A549 (cell line): ENCODE measurements at regions of chr22 and their contacts with region 1.

Region 1: GRCh38 chr22:31272522-31273446 is 19.5 kb downstream of the PIK3IP1 start:
- DNase-seq: peak; percentile 39 to 59
- ATAC-seq: peak; percentile 87 to 93
- H3K4me3 ChIP-seq: no peak overlapping the region
- H3K27ac ChIP-seq: no peak overlapping the region
- H3K4me1 ChIP-seq: no peaks in the 10 kb centered on the region
- CTCF ChIP-seq: peak; percentile 61
- EP300 ChIP-seq: no peak
- POLR2A ChIP-seq: no peak
- RAD21 ChIP-seq: peak; percentile 66 to 68

Region 2: GRCh38 chr22:30908051-30908461 is 364.7 kb before region 1 on chr22:
- CTCF ChIA-PET with region 1: no interaction called
- POLR2A ChIA-PET with region 1: no interaction called
- DNase-seq: no peak
- ATAC-seq: no peak
- H3K4me3 ChIP-seq: no peak overlapping the region
- H3K27ac ChIP-seq: no peak overlapping the region
- H3K4me1 ChIP-seq: no peaks in the 10 kb centered on the region
- CTCF ChIP-seq: no peak
- EP300 ChIP-seq: no peak
- POLR2A ChIP-seq: no peak
- RAD21 ChIP-seq: no peak

Region 3: GRCh38 chr22:31107178-31107893 is 165.4 kb before region 1 on chr22 and contains the start of gene SELENOM:
- CTCF ChIA-PET with region 1: interaction called, 10 read pairs
- POLR2A ChIA-PET with region 1: no interaction called
- DNase-seq: peak; percentile 80 to 96
- ATAC-seq: peak; percentile 94 to 98
- H3K4me3 ChIP-seq: peak within 1 kb of the TSS; percentile 66
- H3K27ac ChIP-seq: peak within 1 kb of the TSS; percentile 78 to 91
- H3K4me1 ChIP-seq: peaks cover 7% of the 10 kb centered on the region
- CTCF ChIP-seq: peak; percentile 77
- EP300 ChIP-seq: no peak
- POLR2A ChIP-seq: peak; percentile 55
- RAD21 ChIP-seq: peak; percentile 74 to 84
- polyA plus RNA-seq, gene SELENOM: 14.2 and 15.3 TPM in 2 replicates

Region 4: DNA sequence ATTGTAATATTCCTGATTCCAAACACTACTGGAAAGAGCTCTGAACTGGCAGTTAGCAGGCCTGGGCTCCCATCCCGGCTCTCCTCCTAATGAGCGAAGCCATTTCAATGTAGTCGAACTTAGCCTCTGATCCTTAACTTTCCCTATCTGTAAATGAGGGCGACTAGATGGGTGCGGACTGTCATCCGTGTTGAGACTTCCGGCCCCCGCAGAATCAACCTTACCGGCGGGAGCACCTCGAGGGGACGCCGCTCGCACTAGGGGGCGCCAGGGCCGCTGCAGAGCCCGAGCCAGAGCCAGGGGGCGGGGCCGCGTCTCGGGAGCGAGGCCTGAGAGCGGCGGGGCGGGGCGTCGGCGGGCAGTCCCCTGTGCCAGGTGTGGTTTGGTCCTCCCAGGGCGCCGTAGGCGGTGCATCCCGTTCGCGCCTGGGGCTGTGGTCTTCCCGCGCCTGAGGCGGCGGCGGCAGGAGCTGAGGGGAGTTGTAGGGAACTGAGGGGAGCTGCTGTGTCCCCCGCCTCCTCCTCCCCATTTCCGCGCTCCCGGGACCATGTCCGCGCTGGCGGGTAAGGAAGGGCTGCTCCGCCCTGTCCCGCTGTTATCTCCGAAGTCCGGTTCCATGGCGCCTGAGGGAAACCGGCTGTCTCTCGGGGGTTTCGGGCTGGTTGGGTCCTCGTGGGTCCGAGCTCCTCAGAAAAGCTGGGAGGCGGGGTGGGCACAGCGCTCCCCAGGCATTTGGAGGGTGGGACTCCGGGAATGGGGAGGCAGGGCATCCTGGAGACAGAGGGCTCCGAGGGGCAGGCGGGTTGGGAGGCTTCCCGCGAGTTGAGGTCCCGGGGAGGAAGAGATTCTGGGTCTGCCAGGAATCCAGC is 60.7 kb before region 1 on chr22 and contains the start of gene LIMK2:
- CTCF ChIA-PET with region 1: interaction called, 134 read pairs
- POLR2A ChIA-PET with region 1: interaction called, 4 read pairs
- DNase-seq: peak; percentile 78 to 84
- ATAC-seq: peak; percentile 98
- H3K4me3 ChIP-seq: peak within 1 kb of the TSS; percentile 79
- H3K27ac ChIP-seq: peak within 1 kb of the TSS; percentile 81 to 88
- H3K4me1 ChIP-seq: peaks cover 8% of the 10 kb centered on the region; the same call in 1 of the 3 replicates
- CTCF ChIP-seq: peak; percentile 72
- EP300 ChIP-seq: no peak
- POLR2A ChIP-seq: peak; percentile 64
- RAD21 ChIP-seq: peak; percentile 59 to 76
- polyA plus RNA-seq, gene LIMK2: 3.1 and 4.9 TPM in 2 replicates

Region 5: DNA sequence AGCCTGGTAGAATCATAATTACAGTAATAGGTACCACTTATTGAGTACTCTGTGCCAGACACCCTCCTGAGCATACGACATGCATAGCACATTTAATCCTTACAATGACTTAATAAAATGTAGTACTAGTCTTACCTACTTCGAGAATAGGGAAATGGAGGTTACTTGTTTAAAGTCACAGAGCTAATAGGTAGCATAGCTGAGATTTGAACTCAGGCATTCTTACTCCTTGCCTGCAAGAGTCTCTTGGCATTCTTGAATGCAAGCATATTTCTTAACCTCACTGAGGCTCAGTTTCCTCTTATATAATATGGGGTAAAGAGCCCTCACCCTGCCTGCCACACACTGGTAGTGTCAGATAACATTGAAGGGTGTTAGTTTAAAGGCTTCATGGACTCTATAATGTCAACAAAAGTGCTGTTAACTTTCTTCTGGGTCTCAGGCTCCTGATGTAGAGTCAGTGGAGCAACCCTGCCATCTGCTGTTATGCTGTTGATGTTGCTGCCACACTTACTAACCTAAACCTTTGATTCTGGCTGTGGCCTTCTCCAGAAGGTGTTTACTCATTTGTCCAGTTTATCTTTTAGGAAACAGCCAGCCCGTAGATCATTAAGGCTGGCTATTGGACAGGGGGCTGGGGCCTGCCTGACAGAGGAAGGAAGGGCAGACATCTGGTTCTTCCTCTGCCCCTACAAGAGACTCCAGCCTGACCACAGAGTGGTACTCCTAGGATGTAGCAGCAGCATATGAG is 41.7 kb before region 1 on chr22:
- CTCF ChIA-PET with region 1: interaction called, 18 read pairs
- POLR2A ChIA-PET with region 1: no interaction called
- DNase-seq: peak in 1 of 2 experiments; percentile 40
- ATAC-seq: peak; percentile 73 to 78; a peak in 5 of 6 replicates
- H3K4me3 ChIP-seq: no peak overlapping the region
- H3K27ac ChIP-seq: no peak overlapping the region
- H3K4me1 ChIP-seq: 0 out of 3 replicates have a peak, but pooled peaks cover 6% of the 10 kb centered on the region
- CTCF ChIP-seq: peak; percentile 50
- EP300 ChIP-seq: no peak
- POLR2A ChIP-seq: no peak
- RAD21 ChIP-seq: peak; percentile 61 to 66

Region 6: GRCh38 chr22:31248138-31248745 is 24.5 kb before region 1 on chr22:
- CTCF ChIA-PET with region 1: interaction called, 28 read pairs
- POLR2A ChIA-PET with region 1: no interaction called
- DNase-seq: no peak
- ATAC-seq: peak in 1 of 2 experiments; percentile 66; a peak in 3 of 6 replicates
- H3K4me3 ChIP-seq: no peak overlapping the region
- H3K27ac ChIP-seq: 0 out of 6 replicates have a peak overlapping the region, but pooled peaks of 1 of the 2 experiments have one; percentile 10
- H3K4me1 ChIP-seq: peaks cover 28% of the 10 kb centered on the region
- CTCF ChIP-seq: no peak
- EP300 ChIP-seq: no peak
- POLR2A ChIP-seq: no peak
- RAD21 ChIP-seq: no peak

Region 7: DNA sequence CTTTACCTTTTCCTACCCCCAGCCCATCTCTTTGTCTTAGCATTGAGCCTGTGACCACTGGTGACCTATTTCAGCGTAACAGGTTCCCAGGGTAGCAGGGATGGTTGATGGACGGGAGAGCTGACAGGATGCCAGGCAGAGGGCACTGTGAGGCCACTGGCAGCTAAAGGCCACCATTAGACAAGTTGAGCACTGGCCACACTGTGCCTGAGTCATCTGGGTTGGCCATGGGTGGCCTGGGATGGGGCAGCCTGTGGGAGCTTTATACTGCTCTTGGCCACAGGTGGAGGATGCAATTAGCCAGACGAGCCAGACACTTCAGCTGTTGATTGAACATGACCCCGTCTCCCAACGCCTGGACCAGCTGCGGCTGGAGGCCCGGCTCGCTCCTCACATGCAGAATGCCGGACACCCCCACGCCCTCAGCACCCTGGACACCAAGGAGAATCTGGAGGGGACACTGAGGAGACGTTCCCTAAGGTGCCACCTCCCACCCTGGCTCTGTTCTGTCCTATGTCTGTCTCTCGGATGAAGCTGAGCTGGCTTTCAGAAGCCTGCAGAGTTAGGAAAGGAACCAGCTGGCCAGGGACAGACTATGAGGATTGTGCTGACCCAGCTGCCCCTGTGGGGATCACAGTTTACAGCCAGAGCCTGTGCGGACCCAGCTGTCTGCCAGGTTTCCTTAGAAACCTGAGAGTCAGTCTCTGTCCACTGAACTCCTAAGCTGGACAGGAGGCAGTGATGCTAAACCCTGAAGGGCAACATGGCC is 10.3 kb before region 1 on chr22:
- CTCF ChIA-PET with region 1: interaction called, 34 read pairs
- POLR2A ChIA-PET with region 1: no interaction called
- DNase-seq: no peak
- ATAC-seq: no peak
- H3K4me3 ChIP-seq: no peak overlapping the region
- H3K27ac ChIP-seq: no peak overlapping the region
- H3K4me1 ChIP-seq: no peaks in the 10 kb centered on the region
- CTCF ChIP-seq: no peak
- EP300 ChIP-seq: no peak
- POLR2A ChIP-seq: no peak
- RAD21 ChIP-seq: no peak